Activated T-helper 2 cell treated with anti-CD3 and anti-CD28 coated beads, Interferon-gamma antibody, Interleukin-2, Interleukin-4, amounts not matched to agents 10 μg/mL and 5 μg/mL and 100 μg/mL, durations not matched to agents 14 hours and 24 hours and 36 hours (primary cell): ENCODE measurements at regions of chr16 and their contacts with region 1.

Region 1: GRCh38 chr16:50747207-50747956 is 5.5 kb downstream of the CYLD start:
- DNase-seq: peak; percentile 21
- H3K4me3 Mint-ChIP-seq: peak overlapping the region; percentile 81
- H3K27ac Mint-ChIP-seq: peak overlapping the region; percentile 95
- H3K4me1 Mint-ChIP-seq: peaks cover 56% of the 10 kb centered on the region
- H3K27me3 Mint-ChIP-seq: no peaks in the 10 kb centered on the region

Region 2: GRCh38 chr16:50368410-50369132 is 378.8 kb before region 1 on chr16 and contains the start of gene BRD7:
- intact Hi-C with region 1: loop called (anchors 2 kb)
- DNase-seq: peak; percentile 59
- H3K4me3 Mint-ChIP-seq: peak within 1 kb of the TSS; percentile 99
- H3K27ac Mint-ChIP-seq: peak within 1 kb of the TSS; percentile 94
- H3K4me1 Mint-ChIP-seq: peaks cover 40% of the 10 kb centered on the region
- H3K27me3 Mint-ChIP-seq: no peaks in the 10 kb centered on the region
- total RNA-seq, gene BRD7: 76.0 and 79.5 TPM in 2 replicates

Region 3: DNA sequence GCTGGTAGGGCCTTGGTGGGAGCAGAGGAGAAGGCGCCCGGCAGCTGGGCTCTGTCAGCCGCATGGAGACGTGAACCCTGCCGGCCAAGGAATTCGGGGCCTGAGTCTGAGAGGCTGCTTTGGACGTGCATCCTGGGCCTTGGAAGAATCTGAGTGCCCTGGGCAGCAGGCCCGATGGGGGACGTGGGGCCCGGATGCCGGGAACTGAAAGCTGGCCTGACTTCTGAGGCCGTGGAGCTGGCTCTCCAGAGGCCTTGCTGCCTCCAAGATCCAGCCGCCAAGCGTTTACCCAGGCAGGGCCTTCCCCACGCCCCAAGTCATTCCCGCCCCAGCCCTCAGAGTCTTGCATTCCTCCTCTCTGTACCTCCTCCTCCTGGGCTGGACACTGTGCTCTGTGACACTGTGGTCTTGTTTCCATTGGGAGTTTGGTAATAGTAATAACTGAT is 162.0 kb before region 1 on chr16:
- intact Hi-C with region 1: loop called (anchors 5 kb)
- DNase-seq: no peak
- H3K4me3 Mint-ChIP-seq: no peak overlapping the region
- H3K27ac Mint-ChIP-seq: no peak overlapping the region
- H3K4me1 Mint-ChIP-seq: peaks cover 31% of the 10 kb centered on the region
- H3K27me3 Mint-ChIP-seq: no peaks in the 10 kb centered on the region

Region 4: DNA sequence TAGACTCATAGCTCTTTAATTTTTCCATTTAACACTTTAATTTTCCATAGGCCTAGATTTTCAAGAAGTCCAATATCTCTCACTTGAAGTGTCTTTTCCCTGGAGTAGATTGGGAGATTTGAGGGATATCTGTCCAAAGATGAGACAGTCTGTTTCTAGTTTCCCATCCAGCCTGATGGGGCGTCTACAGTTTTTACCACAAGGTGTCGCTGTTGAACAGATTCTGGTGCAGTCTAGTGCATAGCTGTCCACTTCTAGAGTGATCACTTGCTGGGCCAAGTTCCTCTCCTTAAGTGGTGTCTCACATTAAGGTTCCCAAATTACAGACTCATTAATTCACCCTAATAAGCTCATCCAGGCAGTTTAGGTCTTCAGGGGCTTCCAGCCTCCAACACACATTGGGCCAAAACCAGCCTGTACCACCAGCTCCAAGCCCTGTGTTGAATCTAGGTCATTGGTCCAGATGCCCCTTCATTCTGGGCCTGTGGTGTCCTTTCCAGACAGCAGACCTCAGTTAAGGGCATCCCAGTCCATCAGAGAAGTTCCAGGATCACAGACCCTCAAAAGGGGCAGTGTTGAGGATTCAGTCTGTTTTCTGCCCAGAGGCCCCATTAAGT is 75.6 kb before region 1 on chr16:
- intact Hi-C with region 1: loop called (anchors 1 kb)
- DNase-seq: peak; percentile 56
- H3K4me3 Mint-ChIP-seq: no peak overlapping the region
- H3K27ac Mint-ChIP-seq: peak overlapping the region; percentile 3
- H3K4me1 Mint-ChIP-seq: peaks cover 30% of the 10 kb centered on the region
- H3K27me3 Mint-ChIP-seq: no peaks in the 10 kb centered on the region

Region 5: DNA sequence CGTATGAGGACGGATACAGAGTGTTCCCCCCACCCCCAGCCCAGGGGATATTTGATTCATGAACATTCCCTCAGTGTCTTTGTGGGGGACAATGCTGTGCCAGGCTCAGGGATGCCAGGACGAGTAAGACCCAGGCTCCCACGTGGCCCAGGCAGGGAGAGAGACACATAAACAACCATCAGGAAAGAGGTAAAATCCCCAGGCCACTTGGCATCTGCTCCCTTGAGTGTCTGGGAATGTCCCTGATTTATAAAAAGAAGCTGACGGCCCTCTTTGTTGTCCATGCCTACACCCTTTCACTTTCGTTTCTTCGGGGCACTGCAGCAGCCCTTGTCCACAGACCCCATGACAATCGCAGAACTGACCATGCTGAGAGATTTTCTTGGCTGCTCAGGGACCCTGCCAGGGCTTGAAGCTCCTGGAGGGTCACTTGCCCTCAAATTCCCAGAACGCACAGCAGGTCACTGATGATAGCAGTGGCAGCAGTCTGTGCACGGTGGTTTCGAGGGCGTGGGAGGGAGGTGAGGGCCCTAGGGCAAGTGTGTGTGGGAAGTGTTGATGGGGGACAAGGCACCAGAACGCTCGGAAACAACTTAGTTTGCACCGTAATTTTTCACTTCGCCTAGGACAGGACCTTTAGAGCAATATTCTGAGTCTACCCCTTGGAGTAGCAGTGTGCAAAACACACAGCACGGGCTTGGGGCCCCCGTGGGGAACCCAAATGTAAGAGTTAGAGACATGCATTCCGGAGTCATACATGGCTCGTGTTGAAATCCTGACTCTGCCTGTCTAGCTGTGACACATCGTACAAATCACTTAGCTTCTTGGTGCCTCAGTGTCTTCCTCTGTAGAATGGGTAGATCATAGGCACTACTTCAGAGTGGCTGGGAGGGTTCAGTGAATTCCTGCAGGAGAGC is 49.3 kb before region 1 on chr16:
- intact Hi-C with region 1: loop called (anchors 2 kb)
- DNase-seq: no peak
- H3K4me3 Mint-ChIP-seq: peak overlapping the region; percentile 70
- H3K27ac Mint-ChIP-seq: peak overlapping the region; percentile 88
- H3K4me1 Mint-ChIP-seq: peaks cover 63% of the 10 kb centered on the region
- H3K27me3 Mint-ChIP-seq: no peaks in the 10 kb centered on the region

Region 6: GRCh38 chr16:50763211-50763610 is 15.8 kb after region 1 on chr16:
- intact Hi-C with region 1: loop called (anchors 1 kb)
- DNase-seq: no peak
- H3K4me3 Mint-ChIP-seq: no peak overlapping the region
- H3K27ac Mint-ChIP-seq: peak overlapping the region; percentile 24
- H3K4me1 Mint-ChIP-seq: peaks cover 65% of the 10 kb centered on the region
- H3K27me3 Mint-ChIP-seq: no peaks in the 10 kb centered on the region

Region 7: DNA sequence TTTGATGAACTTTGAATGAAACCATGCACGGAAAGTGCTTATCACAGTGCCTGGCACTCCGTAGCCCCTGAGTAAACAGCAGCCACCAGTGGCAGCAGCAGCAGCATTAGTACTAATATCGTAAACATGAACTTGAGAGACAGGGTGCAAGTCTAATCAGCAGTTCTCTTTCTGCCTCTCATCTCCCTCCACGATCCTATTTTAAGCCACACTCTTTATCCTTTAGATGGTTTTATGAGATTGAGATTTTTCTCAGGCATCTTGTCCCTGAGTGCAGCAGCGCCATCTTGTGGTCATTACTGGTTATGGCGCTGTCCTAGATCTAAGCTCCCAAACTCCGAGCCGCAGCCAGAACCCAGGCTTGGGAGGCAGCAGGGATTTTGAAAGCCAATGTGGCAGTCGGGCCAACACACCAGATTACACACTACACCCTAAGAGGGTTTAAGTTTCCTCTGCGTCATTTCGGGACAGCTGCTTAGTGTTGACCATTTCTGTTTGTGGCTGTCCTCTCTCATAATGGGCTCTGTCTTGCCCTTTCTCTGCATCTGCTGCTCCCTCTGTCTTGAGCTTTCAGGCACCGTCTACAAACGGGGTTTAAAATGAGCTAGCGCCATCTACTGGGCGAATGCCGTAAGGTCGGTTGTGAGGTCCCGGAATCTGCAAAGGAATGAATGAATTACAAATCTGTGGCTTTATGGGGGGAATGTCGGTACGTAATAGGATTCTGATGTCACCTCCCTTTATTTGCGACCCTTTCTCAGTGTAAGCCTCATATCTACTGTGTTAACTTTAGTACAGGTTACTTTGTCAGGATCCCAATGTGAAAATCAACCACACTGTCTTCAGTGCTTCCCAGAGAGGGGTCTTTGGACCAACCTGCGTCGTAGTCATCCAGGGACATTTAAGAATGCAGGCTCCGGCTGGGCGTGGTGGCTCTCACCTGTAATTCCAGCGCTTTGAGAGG is 59.0 kb after region 1 on chr16:
- intact Hi-C with region 1: loop called (anchors 1 kb)
- DNase-seq: peak; percentile 78
- H3K4me3 Mint-ChIP-seq: peak overlapping the region; percentile 68
- H3K27ac Mint-ChIP-seq: peak overlapping the region; percentile 47
- H3K4me1 Mint-ChIP-seq: peaks cover 12% of the 10 kb centered on the region
- H3K27me3 Mint-ChIP-seq: peaks cover 2% of the 10 kb centered on the region